ENCODE measurements at regions of chr17 and their contacts with region 1.

Region 1: DNA sequence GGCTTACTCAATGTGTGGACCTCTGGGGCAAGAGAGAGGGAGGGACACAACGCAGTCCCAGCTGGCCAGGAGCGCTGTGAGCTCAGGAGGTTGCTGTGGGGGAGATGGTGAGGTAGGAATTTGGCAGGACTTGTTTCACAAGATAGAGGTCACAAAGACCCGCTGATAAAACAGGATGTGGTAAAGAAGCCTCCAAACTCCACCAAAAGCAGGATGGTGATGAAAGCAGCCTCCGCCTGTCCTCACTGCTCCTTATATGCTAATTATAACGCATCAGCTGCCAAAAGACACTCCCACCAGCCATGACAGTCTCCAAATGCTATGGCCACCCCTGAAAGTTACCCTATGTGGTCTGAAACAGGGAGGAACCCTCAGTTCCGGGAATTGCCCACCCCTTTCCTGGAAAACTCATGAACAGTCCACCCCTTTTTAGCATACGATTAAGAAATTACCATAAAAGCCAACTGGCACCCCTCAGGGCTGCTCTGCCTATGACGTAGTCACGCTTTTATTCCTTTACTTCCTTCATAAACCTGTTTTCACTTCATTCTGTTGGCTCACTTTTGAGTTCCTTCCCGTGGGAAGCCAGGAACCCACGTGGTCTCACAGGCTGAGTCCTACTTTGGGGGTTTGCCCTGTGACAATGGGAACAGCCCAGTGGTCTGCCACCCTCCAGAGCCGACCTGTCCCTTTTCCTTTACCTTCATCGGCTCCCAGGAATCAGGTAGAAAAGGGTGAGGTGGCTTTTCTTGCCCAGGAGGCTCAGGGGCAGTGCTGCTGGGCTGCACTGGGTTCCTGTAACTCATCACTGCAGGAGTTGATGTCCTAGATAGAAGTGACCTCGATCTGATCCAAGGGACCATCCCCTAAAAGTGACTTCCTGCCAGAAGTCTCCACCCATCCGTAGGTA is 5.4 kb upstream of the EIF4A3 start:
- DNase-seq: no peak

Region 2: DNA sequence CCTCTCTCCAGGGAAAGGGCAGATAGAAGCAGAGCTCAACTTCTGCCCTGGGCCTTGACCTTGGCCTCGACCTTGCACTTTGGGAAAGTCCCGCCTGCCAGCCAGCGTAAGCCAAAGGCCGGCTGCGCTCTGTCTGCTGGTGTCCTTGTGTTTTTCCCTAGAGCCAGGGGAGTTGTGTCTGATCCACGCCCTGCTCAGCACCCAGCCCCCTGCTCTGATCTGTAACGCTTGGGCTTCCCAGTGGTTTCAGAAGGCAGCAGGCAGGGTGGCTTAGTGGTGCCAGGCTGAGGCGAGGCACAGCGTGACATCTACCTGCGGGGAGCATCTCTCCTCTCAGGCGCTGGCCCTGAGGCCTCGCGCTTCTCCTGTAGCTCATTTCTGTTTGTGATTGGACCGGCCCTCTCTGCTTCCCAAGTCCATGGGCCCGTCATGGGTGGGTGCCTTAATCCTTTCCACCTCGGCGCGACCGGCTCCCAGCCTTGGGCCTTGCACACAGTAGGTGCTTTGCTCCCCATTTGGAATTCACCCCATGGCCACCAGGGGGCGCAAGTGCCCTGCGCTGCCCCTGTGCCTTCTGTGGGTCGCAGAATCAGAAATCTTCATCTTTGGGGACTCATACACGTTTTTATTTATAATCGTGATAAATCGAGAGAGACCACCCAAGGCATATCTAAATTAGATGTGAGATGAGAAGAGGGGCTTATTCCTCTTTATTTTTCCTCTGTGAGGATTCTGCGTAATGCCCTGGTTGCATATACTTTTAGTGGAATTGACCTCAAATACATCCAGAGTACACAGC is 43.6 kb after region 1 on chr17:
- intact Hi-C with region 1: no loop called
- DNase-seq: peak in 1 of 10 donors; percentile 79

Region 3: DNA sequence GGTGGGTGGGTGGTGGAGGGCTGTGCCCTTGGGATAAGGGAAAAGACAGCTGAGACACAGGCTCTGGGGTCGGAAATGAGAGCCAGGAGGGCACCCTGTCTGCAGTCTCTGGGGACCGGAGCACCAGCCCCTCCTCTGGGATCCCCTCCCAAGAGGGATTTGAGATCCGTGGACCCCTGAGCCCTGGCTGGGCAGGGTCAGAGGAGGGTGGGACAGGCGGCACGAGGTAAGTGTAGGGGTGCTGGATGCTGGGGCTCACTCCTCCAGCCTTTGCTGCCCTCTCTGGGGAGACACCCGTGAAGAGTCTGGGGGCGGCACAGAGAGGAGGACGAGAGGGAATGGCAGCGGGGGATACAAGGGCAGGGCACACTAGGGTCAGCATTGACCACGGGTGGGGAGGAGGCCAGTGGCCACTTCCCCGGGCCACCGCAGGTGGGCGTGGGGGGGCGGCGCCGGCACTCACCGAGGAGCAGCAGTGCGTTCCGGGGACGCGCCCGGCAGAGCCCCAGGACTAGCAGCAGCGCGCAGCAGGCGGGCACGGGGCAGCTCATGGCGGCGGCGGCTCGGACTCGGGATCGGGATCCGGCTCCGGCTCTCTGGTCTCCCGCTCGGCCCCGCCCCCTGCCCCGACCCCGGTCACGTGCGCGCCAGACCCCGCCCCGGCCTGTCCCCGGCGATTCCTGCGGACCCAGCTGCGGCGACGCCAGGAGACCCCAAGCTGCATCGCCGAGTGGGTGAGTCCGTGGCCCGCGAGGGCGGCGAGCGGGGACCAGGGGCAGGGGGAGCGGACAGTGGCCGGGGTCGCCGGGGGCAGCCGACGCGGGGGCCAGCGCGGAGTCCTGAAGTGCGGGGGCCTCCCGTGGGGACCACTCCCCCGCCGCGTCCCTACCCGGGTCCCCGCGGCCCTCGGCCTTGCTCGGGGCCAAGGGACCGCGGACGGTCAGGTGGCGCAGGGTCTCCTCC is 67.7 kb after region 1 on chr17 and contains the starts of genes SGSH and SLC26A11:
- intact Hi-C with region 1: loop called (anchors 5 kb)
- DNase-seq: peak; percentile 54 to 95 (median 74)

Region 4: DNA sequence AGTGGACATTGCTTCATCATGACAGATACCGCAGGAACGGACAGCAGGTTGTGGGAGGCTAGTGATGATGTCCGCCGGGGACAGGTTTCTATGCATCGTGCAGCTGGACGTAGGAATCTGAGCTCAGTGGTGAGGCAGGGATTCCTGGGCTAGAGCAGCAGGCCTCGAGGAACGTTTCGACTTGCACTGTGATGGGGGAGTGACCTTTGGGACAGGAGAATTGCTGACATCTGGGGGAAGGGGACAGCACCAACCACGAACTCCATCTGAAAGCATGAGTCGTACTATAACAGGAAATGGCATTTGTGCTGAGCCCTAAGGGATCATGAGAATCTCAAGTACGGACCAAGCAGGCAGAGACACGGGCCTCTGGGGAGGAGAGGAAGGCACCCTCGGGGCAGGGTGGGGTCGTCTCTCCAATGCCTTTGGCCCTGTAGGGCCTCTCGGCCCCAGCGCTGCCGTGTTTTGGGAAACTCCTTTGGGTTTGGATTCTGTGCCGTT is 196.9 kb after region 1 on chr17:
- intact Hi-C with region 1: no loop called
- DNase-seq: peak in 3 of 10 donors; percentile 52 to 69 (median 67)

Measured in posterior cingulate gyrus (tissue), 11 donors.